ENCODE measurements at regions of chr10 and their contacts with region 1.

Region 1: GRCh38 chr10:30488316-30488715 is 54.3 kb downstream of the MAP3K8 start:
- DNase-seq: no peak
- ATAC-seq: peak; percentile 54
- H3K4me3 ChIP-seq: no peak overlapping the region
- H3K27ac ChIP-seq: peak overlapping the region; percentile 55
- H3K4me1 ChIP-seq: peaks cover 55% of the 10 kb centered on the region
- H3K27me3 ChIP-seq: no peaks in the 10 kb centered on the region
- CTCF ChIP-seq: no peak
- EP300 ChIP-seq: no peak
- POLR2A ChIP-seq: no peak
- RAD21 ChIP-seq: no peak

Region 2: DNA sequence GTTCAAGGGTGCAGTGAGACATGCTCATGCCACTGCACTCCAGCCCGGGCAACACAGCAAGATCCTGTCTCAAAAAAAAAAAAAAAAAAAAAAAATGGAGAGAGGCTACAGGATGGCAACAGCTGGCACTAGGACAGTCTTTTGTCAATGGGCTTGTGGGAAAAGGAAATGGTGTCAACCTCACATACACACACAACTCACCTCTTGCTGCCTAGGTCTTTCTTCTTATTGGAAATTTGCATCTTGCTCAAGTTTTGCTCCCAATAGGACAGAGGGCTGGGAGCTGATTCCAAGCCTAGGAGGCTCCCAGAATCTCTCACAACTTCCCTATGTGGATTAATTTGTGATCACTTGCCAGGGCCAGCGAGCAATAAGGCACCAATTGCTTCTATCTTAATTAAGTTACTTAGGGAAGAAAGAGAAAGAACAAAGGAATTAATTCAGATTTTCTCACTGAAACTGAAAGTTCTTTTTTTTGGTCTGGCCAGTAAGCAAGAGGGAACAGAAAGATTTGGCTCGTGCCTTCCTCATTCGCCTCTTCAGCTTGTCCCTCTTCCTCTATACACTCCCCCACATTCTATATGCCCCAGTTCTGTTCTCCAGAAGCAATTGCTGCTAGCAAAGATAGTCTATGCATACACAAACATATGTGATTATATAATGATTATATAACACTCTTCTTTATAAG is 20.5 kb before region 1 on chr10:
- CTCF ChIA-PET with region 1: interaction called, 3 read pairs
- POLR2A ChIA-PET with region 1: no interaction called
- RAD21 ChIA-PET with region 1: interaction called, 10 read pairs
- SMC1A ChIA-PET with region 1: interaction called, 8 read pairs
- in situ Hi-C with region 1: no loop called
- intact Hi-C with region 1: no loop called
- DNase-seq: no peak
- ATAC-seq: peak; percentile 94
- H3K4me3 ChIP-seq: no peak overlapping the region
- H3K27ac ChIP-seq: peak overlapping the region; percentile 62
- H3K4me1 ChIP-seq: peaks cover 11% of the 10 kb centered on the region
- H3K27me3 ChIP-seq: no peaks in the 10 kb centered on the region
- CTCF ChIP-seq: no peak
- EP300 ChIP-seq: no peak
- POLR2A ChIP-seq: no peak
- RAD21 ChIP-seq: no peak

Region 3: DNA sequence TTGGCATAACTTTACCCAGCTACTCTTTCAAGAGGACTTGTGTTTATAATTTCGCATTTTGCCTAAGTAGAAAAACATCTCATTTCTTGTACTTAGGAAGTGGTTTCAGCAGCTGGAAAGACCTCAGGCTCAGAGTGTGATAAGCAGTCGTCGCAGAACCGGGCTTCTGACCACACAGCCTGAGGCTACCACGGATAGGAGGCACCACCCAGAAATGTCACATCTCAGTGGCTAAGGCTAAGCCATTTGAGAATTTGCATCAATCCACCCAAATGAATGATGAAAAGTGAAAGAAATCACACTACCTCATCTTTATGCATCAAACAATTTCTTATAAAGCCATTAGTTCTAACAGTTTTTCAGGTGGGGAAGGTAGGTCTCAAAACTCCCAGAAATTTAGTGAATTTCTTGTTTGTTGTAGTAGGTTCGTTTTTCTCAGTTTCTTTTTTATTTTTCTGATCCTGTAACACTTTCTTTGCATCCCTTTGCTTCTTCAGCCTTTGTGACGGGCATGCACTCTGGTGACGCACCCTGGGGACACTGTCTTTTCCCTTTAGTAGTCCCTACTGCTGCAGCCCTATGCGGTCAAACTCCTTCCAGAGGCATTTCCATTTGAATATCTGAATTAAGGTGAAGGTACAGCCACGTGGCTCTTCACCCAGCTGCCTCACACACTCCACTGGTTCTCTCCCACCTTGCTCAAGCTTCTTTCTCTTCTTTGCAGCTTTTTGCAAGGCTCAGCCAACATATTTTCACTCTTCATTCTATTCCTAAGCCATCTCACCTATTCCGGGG is 14.1 kb after region 1 on chr10:
- CTCF ChIA-PET with region 1: interaction called, 20 read pairs
- POLR2A ChIA-PET with region 1: interaction called, 20 read pairs
- RAD21 ChIA-PET with region 1: interaction called, 19 read pairs
- SMC1A ChIA-PET with region 1: interaction called, 39 read pairs
- in situ Hi-C with region 1: no loop called
- intact Hi-C with region 1: no loop called
- DNase-seq: no peak
- ATAC-seq: peak; percentile 81
- H3K4me3 ChIP-seq: peak overlapping the region; percentile 29; the same call in 1 of the 2 replicates
- H3K27ac ChIP-seq: peak overlapping the region; percentile 81
- H3K4me1 ChIP-seq: peaks cover 45% of the 10 kb centered on the region
- H3K27me3 ChIP-seq: no peaks in the 10 kb centered on the region
- CTCF ChIP-seq: no peak
- EP300 ChIP-seq: peak; percentile 56 to 60; a peak in 2 of 4 replicates
- POLR2A ChIP-seq: no peak
- RAD21 ChIP-seq: no peak

Region 4: GRCh38 chr10:30510169-30510930 is 22.0 kb after region 1 on chr10:
- CTCF ChIA-PET with region 1: interaction called, 20 read pairs
- POLR2A ChIA-PET with region 1: interaction called, 5 read pairs
- RAD21 ChIA-PET with region 1: interaction called, 27 read pairs
- SMC1A ChIA-PET with region 1: interaction called, 39 read pairs
- in situ Hi-C with region 1: no loop called
- intact Hi-C with region 1: no loop called
- DNase-seq: no peak
- ATAC-seq: peak; percentile 95
- H3K4me3 ChIP-seq: 0 out of 2 replicates have a peak overlapping the region, but pooled peaks have one; percentile 23
- H3K27ac ChIP-seq: peak overlapping the region; percentile 85
- H3K4me1 ChIP-seq: peaks cover 29% of the 10 kb centered on the region
- H3K27me3 ChIP-seq: no peaks in the 10 kb centered on the region
- CTCF ChIP-seq: peak in 2 of 3 experiments; percentile 7 to 23; a peak in 1 of 6 replicates
- EP300 ChIP-seq: no peak
- POLR2A ChIP-seq: no peak
- RAD21 ChIP-seq: no peak